Activated CD4-positive, alpha-beta memory T cell treated with anti-CD3 and anti-CD28 coated beads for 36 hours (primary cell): ENCODE measurements at regions of chr22 and their contacts with region 1.

Region 1: DNA sequence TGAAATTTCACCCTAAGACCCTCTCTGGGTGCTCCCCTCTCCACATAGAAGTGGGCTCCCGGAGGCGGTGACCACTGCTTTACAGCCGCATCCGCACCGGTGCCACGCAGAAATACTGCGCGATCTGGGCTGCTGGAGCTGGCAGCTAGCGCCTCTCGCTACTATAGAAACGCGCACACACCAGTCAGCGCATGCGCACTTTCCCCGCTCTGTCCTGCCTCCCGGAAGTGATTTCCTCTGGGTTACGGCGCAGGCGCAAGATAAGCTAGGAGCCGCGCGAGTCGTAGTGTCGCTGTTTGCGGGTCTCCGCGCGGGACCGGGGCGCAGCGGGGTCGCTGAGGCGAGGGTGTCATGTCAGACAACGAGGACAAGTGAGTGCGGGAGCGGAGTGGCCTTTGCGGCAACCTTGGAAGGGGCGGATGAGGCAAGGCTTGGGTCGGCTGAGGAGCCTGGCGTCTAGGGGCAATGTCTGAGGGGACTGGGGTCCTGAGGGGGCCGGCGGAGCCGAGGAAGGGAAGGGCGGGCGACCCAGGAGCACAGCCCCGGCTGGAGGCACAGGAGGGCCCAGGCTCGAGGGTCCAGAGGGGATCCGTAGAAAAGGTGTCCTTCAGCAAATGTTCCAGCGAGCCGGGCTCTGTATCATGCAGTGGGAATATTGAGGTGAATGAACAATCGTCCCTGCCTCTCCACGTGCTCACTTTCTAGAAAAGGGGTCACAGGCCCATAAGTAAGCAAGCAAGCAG is at the starts of genes C22orf23 and POLR2F:
- DNase-seq: peak; percentile 98
- H3K4me3 Mint-ChIP-seq: peak within 1 kb of the TSS; percentile 99
- H3K27ac Mint-ChIP-seq: peak within 1 kb of the TSS; percentile 79
- H3K4me1 Mint-ChIP-seq: peaks cover 34% of the 10 kb centered on the region
- H3K27me3 Mint-ChIP-seq: peaks cover 9% of the 10 kb centered on the region
- total RNA-seq, gene C22orf23: 0.14 TPM in 1 of 2 experiments, not detected in the other
- total RNA-seq, gene POLR2F: 67.7 to 74.9 TPM

Region 2: GRCh38 chr22:37807410-37808293 is 146.0 kb before region 1 on chr22 and contains the start of gene GCAT:
- CTCF ChIA-PET with region 1: interaction called, 3 read pairs
- POLR2A ChIA-PET with region 1: no interaction called
- intact Hi-C with region 1: loop called (anchors 5 kb)
- DNase-seq: peak; percentile 96
- H3K4me3 Mint-ChIP-seq: peak within 1 kb of the TSS; percentile 77
- H3K27ac Mint-ChIP-seq: no peak within 1 kb of the TSS
- H3K4me1 Mint-ChIP-seq: peaks cover 33% of the 10 kb centered on the region
- H3K27me3 Mint-ChIP-seq: peaks cover 46% of the 10 kb centered on the region
- total RNA-seq, gene GCAT: 21.8 TPM

Region 3: GRCh38 chr22:37896181-37896592 is 57.4 kb before region 1 on chr22:
- CTCF ChIA-PET with region 1: no interaction called
- POLR2A ChIA-PET with region 1: no interaction called
- intact Hi-C with region 1: loop called (anchors 5 kb)
- DNase-seq: peak; percentile 71
- H3K4me3 Mint-ChIP-seq: no peak overlapping the region
- H3K27ac Mint-ChIP-seq: peak overlapping the region; percentile 93
- H3K4me1 Mint-ChIP-seq: peaks cover 22% of the 10 kb centered on the region
- H3K27me3 Mint-ChIP-seq: no peaks in the 10 kb centered on the region

Region 4: GRCh38 chr22:37965940-37966664 is 12.5 kb after region 1 on chr22:
- CTCF ChIA-PET with region 1: interaction called, 29 read pairs
- POLR2A ChIA-PET with region 1: no interaction called
- intact Hi-C with region 1: no loop called
- DNase-seq: no peak
- H3K4me3 Mint-ChIP-seq: no peak overlapping the region
- H3K27ac Mint-ChIP-seq: no peak overlapping the region
- H3K4me1 Mint-ChIP-seq: no peaks in the 10 kb centered on the region
- H3K27me3 Mint-ChIP-seq: no peaks in the 10 kb centered on the region